Heart right ventricle (tissue), 16 donors: ENCODE measurements at regions of chr10 and their contacts with region 1.

Region 1: GRCh38 chr10:86376852-86377796 is 10.5 kb upstream of the GRID1 start:
- DNase-seq: peak; percentile 56 to 80
- ATAC-seq: peak; percentile 83 to 93 (median 90)
- H3K4me3 ChIP-seq: peak overlapping the region in 7 of 10 donors; percentile 15 to 31 (median 26)
- H3K27ac ChIP-seq: no peak overlapping the region
- H3K4me1 ChIP-seq: peaks cover 0 to 6% (median 3%) of the 10 kb centered on the region in 9 donors
- H3K27me3 ChIP-seq: peaks cover 0 to 89% (median 64%) of the 10 kb centered on the region in 7 donors
- CTCF ChIP-seq: peak; percentile 96 to 100 (median 99)

Region 2: GRCh38 chr10:84537447-84537931 is 1839.6 kb before region 1 on chr10:
- intact Hi-C with region 1: loop called in 8 of 10 experiments (anchors 5 to 10 kb)
- DNase-seq: peak; percentile 27 to 51
- ATAC-seq: peak; percentile 81 to 93 (median 90)
- H3K4me3 ChIP-seq: no peak overlapping the region
- H3K27ac ChIP-seq: no peak overlapping the region
- H3K4me1 ChIP-seq: peaks cover 0 to 14% (median 10%) of the 10 kb centered on the region in 9 donors
- H3K27me3 ChIP-seq: peaks cover 0 to 38% (median 32%) of the 10 kb centered on the region in 7 donors
- CTCF ChIP-seq: peak; percentile 70 to 93 (median 87)

Region 3: GRCh38 chr10:84783386-84783785 is 1593.7 kb before region 1 on chr10:
- intact Hi-C with region 1: loop called in 1 of 10 experiments (anchors 10 kb)
- DNase-seq: peak in 1 of 2 donors; percentile 15
- ATAC-seq: peak in 5 of 8 donors; percentile 70 to 79 (median 74)
- H3K4me3 ChIP-seq: no peak overlapping the region
- H3K27ac ChIP-seq: no peak overlapping the region
- H3K4me1 ChIP-seq: no peaks in the 10 kb centered on the region
- H3K27me3 ChIP-seq: no peaks in the 10 kb centered on the region
- CTCF ChIP-seq: peak; percentile 32 to 64 (median 57)

Region 4: GRCh38 chr10:85548034-85548433 is 829.1 kb before region 1 on chr10:
- intact Hi-C with region 1: loop called in 8 of 10 experiments (anchors 5 to 10 kb)
- DNase-seq: peak in 1 of 2 donors; percentile 16
- ATAC-seq: peak in 1 of 8 donors; percentile 70
- H3K4me3 ChIP-seq: no peak overlapping the region
- H3K27ac ChIP-seq: no peak overlapping the region
- H3K4me1 ChIP-seq: no peaks in the 10 kb centered on the region
- H3K27me3 ChIP-seq: peaks cover 0 to 4% (median 0%) of the 10 kb centered on the region in 7 donors
- CTCF ChIP-seq: peak in 7 of 9 donors; percentile 5 to 59 (median 43)

Region 5: DNA sequence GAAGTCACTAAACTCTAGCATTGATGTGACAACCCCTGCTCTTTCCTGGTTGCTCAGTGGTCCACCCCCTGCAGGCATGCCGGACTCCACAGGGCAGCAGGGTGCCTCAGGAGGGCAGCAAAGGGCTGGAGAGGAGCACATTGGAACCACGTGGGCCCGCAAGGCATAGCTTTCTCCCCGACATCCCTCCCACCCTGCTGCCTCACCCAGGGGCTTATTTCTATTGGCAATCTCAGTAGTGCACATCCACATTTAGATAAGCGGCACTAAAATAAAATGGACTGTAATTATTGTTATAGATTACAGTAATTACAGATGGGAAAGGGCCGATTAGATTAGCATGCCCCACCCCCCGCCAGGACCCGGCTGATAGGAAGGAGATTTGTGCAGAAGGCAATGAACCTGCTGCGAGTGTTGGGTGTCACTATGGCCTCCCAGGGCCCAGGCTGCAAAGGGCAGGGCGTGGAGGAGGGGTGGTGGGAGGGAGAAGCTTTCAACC is 590.7 kb before region 1 on chr10:
- intact Hi-C with region 1: loop called in 8 of 10 experiments (anchors 5 to 10 kb)
- DNase-seq: no peak
- ATAC-seq: peak in 6 of 8 donors; percentile 61 to 76 (median 67)
- H3K4me3 ChIP-seq: no peak overlapping the region
- H3K27ac ChIP-seq: no peak overlapping the region
- H3K4me1 ChIP-seq: peaks cover 0 to 8% (median 0%) of the 10 kb centered on the region in 9 donors
- H3K27me3 ChIP-seq: no peaks in the 10 kb centered on the region
- CTCF ChIP-seq: peak in 8 of 9 donors; percentile 25 to 57 (median 47)

Region 6: DNA sequence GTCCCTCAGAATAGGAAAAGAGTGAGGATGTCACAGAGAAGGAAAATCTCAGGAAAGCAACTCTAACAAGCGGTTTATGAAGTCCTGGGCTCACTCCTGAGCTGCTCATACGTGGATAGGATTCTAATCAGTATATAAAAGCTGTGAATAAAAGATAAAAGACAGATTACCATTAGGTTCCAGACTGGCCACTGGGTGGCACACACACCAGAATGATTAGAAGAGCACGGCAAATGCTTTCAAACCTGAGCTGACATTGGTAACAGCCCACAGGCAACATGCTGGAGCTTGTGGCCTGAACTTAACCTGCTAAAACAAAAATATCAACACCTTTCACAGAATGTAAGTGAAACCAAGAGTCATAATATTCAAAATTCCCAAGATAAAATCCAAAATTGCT is 381.3 kb before region 1 on chr10:
- intact Hi-C with region 1: loop called in 4 of 10 experiments (anchors 10 kb)
- DNase-seq: no peak
- ATAC-seq: peak in 2 of 8 donors; percentile 57 to 60
- H3K4me3 ChIP-seq: no peak overlapping the region
- H3K27ac ChIP-seq: no peak overlapping the region
- H3K4me1 ChIP-seq: peaks cover 0 to 3% (median 0%) of the 10 kb centered on the region in 9 donors
- H3K27me3 ChIP-seq: peaks cover 0 to 8% (median 0%) of the 10 kb centered on the region in 7 donors
- CTCF ChIP-seq: peak in 6 of 9 donors; percentile 34 to 54 (median 47)

Region 7: DNA sequence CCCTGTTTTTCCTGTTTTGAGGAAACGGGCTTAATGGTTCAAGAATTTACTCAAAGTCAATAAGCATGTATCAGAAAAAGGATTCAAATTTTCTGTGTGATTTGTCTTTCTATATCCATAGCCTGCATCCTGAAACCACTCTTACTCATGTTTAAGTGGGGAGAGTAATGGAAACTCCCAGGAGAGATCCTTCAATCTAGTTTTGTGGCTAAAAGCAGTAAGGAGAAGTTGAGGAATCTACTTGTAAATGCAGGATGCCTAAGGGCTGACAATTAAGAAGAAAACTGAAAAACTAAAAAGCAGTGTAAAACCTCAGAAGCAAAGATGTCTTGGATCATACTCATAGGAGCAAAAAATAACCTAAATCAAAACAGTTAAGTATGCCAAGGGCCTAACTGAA is 57.5 kb after region 1 on chr10:
- intact Hi-C with region 1: no loop called
- DNase-seq: no peak
- ATAC-seq: no peak
- H3K4me3 ChIP-seq: no peak overlapping the region
- H3K27ac ChIP-seq: no peak overlapping the region
- H3K4me1 ChIP-seq: peaks cover 0 to 7% (median 0%) of the 10 kb centered on the region in 9 donors
- H3K27me3 ChIP-seq: no peaks in the 10 kb centered on the region
- CTCF ChIP-seq: no peak